Prostate gland (tissue), 2 donors: ENCODE measurements at regions of chr6 and their contacts with region 1.

Region 1: DNA sequence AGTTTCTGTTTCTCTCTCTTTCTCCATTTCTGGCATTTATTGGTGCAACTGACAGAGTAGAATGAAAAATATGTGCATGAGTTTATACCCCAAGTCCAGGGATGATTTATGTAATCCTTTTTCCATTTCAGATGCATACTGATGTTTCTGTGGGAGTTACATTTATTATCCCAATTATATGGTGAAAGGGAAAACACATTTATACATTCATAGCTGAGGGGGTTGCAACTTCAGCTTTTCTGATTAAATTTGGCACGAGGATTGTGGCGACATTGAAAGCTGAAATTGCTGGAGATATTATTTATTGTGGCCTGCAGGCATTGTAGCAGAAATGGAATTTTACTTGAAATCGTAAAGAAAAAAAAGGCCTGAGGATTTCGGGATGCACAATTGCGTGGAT is 31.5 kb upstream of the FNDC1 start:
- DNase-seq: no peak
- H3K4me3 ChIP-seq: no peak overlapping the region
- H3K27ac ChIP-seq: no peak overlapping the region
- H3K4me1 ChIP-seq: no peaks in the 10 kb centered on the region
- H3K27me3 ChIP-seq: no peaks in the 10 kb centered on the region
- CTCF ChIP-seq: no peak
- POLR2A ChIP-seq: no peak

Region 2: GRCh38 chr6:159042003-159042825 is 95.5 kb before region 1 on chr6:
- intact Hi-C with region 1: loop called (anchors 2 kb)
- DNase-seq: peak; percentile 68
- H3K4me3 ChIP-seq: no peak overlapping the region
- H3K27ac ChIP-seq: no peak overlapping the region
- H3K4me1 ChIP-seq: no peaks in the 10 kb centered on the region
- H3K27me3 ChIP-seq: no peaks in the 10 kb centered on the region
- CTCF ChIP-seq: peak; percentile 69 to 92 (median 85)
- POLR2A ChIP-seq: no peak

Region 3: GRCh38 chr6:159104163-159104925 is 33.3 kb before region 1 on chr6:
- intact Hi-C with region 1: no loop called
- DNase-seq: peak; percentile 32
- H3K4me3 ChIP-seq: no peak overlapping the region
- H3K27ac ChIP-seq: no peak overlapping the region
- H3K4me1 ChIP-seq: no peaks in the 10 kb centered on the region
- H3K27me3 ChIP-seq: no peaks in the 10 kb centered on the region
- CTCF ChIP-seq: peak; percentile 44 to 77 (median 72)
- POLR2A ChIP-seq: no peak

Region 4: GRCh38 chr6:159174263-159174969 is 36.7 kb after region 1 on chr6:
- intact Hi-C with region 1: no loop called
- DNase-seq: peak; percentile 17
- H3K4me3 ChIP-seq: no peak overlapping the region
- H3K27ac ChIP-seq: no peak overlapping the region
- H3K4me1 ChIP-seq: no peaks in the 10 kb centered on the region
- H3K27me3 ChIP-seq: peaks cover 22% of the 10 kb centered on the region
- CTCF ChIP-seq: peak; percentile 28 to 53 (median 44)
- POLR2A ChIP-seq: no peak

Region 5: DNA sequence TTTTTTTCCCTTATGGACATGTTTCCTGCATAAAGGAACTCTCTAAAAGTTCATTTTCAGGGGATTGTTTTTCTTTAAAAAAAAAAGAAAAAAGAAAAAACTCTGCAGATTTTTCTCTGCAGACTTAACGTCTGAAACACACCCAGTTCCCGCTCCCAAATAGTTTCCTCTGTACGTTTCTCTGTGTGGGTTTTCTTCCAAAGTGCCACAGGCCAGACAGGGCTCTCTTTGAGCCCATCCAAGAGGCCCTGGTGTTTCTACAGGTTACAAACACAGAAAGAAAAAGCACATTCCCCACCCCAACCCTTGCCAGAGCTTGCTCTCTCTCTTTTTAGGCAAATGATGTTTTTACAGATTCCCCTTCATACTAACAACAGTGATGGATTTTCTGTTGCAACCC is 290.1 kb after region 1 on chr6:
- intact Hi-C with region 1: no loop called
- DNase-seq: no peak
- H3K4me3 ChIP-seq: no peak overlapping the region
- H3K27ac ChIP-seq: no peak overlapping the region
- H3K4me1 ChIP-seq: no peaks in the 10 kb centered on the region
- H3K27me3 ChIP-seq: no peaks in the 10 kb centered on the region
- CTCF ChIP-seq: no peak
- POLR2A ChIP-seq: no peak